ENCODE measurements at regions of chr9 and their contacts with region 1.

Region 1: GRCh38 chr9:75890472-75891276 is at the start of gene PCSK5:
- DNase-seq: peak; percentile 92
- H3K4me3 ChIP-seq: peak within 1 kb of the TSS; percentile 44 to 60 (median 60)
- H3K27ac ChIP-seq: peak within 1 kb of the TSS; percentile 71
- H3K4me1 ChIP-seq: peaks cover 16% of the 10 kb centered on the region
- H3K27me3 ChIP-seq: no peaks in the 10 kb centered on the region
- CTCF ChIP-seq: no peak
- total RNA-seq, gene PCSK5: 2.7 to 15.2 TPM

Region 2: GRCh38 chr9:75088260-75088905 is 802.3 kb before region 1 on chr9 and contains the start of gene OSTF1:
- CTCF ChIA-PET with region 1: no interaction called
- dilution Hi-C with region 1: no loop called
- in situ Hi-C with region 1: no loop called
- intact Hi-C with region 1: loop called (anchors 10 kb)
- DNase-seq: peak; percentile 97
- H3K4me3 ChIP-seq: peak within 1 kb of the TSS; percentile 95 to 96 (median 96)
- H3K27ac ChIP-seq: peak within 1 kb of the TSS; percentile 92
- H3K4me1 ChIP-seq: peaks cover 29% of the 10 kb centered on the region
- H3K27me3 ChIP-seq: no peaks in the 10 kb centered on the region
- CTCF ChIP-seq: no peak
- total RNA-seq, gene OSTF1: 31.8 to 53.1 TPM

Region 3: GRCh38 chr9:75855509-75855908 is 35.2 kb before region 1 on chr9:
- CTCF ChIA-PET with region 1: no interaction called
- dilution Hi-C with region 1: no loop called
- in situ Hi-C with region 1: no loop called
- intact Hi-C with region 1: no loop called
- DNase-seq: peak; percentile 16
- H3K4me3 ChIP-seq: no peak overlapping the region
- H3K27ac ChIP-seq: no peak overlapping the region
- H3K4me1 ChIP-seq: no peaks in the 10 kb centered on the region
- H3K27me3 ChIP-seq: no peaks in the 10 kb centered on the region
- CTCF ChIP-seq: peak; percentile 45 to 48

Region 4: DNA sequence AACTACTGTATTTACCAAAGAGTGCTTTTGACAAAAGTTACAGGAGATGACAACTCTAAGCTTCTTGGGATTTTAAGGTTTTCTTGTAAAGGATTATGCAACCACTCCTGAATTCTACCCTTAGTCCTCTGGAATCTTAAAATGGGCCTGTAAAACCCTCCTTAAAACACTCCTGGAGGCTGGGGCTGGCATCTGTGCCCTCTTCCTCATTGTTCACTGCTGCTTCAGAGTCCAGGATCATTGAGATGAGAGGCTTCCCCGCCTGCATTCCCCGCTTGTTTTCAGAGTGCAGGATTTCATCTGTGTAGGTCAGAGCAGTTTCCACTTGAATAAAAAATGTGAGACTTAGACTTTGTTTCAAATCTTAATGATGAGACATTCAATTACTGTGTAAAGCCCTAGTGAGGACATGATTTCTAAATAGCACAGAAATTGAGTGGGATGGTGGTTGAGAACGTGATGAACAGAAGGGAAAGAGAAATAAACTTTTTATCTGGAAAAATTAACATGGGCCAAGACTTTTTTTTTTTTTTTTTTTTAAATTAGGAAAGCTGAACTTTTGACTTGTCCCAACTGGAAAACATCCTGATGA is 40.2 kb after region 1 on chr9:
- CTCF ChIA-PET with region 1: no interaction called
- dilution Hi-C with region 1: no loop called
- in situ Hi-C with region 1: no loop called
- intact Hi-C with region 1: loop called (anchors 5 kb)
- DNase-seq: no peak
- H3K4me3 ChIP-seq: no peak overlapping the region
- H3K27ac ChIP-seq: no peak overlapping the region
- H3K4me1 ChIP-seq: no peaks in the 10 kb centered on the region
- H3K27me3 ChIP-seq: no peaks in the 10 kb centered on the region
- CTCF ChIP-seq: no peak

Region 5: GRCh38 chr9:75979146-75979761 is 88.6 kb after region 1 on chr9:
- CTCF ChIA-PET with region 1: interaction called, 3 read pairs
- dilution Hi-C with region 1: no loop called
- in situ Hi-C with region 1: no loop called
- intact Hi-C with region 1: loop called (anchors 5 kb)
- DNase-seq: no peak
- H3K4me3 ChIP-seq: no peak overlapping the region
- H3K27ac ChIP-seq: no peak overlapping the region
- H3K4me1 ChIP-seq: no peaks in the 10 kb centered on the region
- H3K27me3 ChIP-seq: no peaks in the 10 kb centered on the region
- CTCF ChIP-seq: peak; percentile 32 to 47

Region 6: DNA sequence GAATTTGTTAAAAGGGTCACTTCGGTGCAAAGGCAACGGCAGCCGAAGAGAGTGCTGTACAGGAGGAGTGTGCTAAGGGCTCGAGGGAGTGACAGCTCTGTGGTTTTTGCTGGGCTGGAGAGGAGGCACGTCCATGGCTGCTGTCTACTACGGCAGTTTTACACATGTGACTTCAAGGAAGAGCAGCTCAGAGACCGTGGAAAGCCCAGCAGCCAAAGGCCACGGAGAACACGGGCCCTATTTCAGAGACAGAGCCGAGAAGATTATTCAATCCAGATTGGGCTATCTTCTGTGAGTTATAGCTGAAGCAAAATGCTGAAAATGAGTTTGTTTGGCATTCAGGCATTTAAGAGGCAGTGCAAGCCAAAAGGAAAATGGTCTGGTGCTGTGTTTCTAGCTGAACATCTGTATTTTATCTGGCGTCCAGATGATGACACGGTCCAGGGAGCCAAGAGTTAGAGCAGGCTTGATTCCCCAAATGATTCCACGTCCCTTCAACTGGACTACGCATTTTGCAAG is 407.1 kb after region 1 on chr9:
- CTCF ChIA-PET with region 1: no interaction called
- dilution Hi-C with region 1: no loop called
- in situ Hi-C with region 1: loop called in 1 of 2 experiments (anchors 25 kb)
- intact Hi-C with region 1: loop called (anchors 1 kb)
- DNase-seq: no peak
- H3K4me3 ChIP-seq: no peak overlapping the region
- H3K27ac ChIP-seq: no peak overlapping the region
- H3K4me1 ChIP-seq: peaks cover 3% of the 10 kb centered on the region
- H3K27me3 ChIP-seq: no peaks in the 10 kb centered on the region
- CTCF ChIP-seq: no peak